ENCODE measurements at regions of chr20 and their contacts with region 1.

Region 1: DNA sequence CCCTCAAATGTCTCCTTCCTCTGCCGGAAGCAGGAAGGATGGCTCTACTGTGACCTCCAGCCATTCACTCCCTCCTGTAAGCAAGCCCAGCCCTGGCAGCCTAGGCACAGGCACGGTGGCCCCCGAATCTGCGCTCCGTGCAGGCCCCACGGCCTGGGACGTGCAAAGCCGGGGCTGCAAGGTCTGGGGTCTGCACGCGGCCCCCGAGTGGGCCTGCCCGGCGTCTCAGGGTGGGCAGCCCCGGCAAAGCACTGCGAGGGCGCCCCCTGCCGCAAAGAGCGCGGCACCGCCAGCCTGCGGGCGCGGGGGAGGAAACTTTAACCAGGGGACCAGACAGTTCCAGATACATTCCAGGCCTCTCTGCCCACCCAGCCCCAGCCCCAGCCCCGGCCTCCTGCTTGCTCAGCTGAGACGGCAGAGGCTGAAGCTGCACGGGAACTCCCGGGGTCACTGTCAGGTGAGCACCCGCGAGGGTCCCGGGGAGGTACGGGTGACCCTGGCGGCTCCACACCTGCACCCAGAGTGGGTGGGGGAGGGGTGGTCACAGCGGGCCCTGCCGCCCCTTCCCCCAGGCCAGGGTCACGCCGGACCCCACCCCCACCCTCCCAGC is 98.8 kb downstream of the ASXL1 start:
- DNase-seq: peak; percentile 97
- H3K4me3 ChIP-seq: peak overlapping the region; percentile 51 to 62
- H3K27ac ChIP-seq: peak overlapping the region; percentile 42 to 94; a peak in 3 of 4 replicates
- H3K4me1 ChIP-seq: peaks cover 5 to 69% of the 10 kb centered on the region in 2 experiments; a peak in 3 of 4 replicates
- H3K27me3 ChIP-seq: no peaks in the 10 kb centered on the region
- CTCF ChIP-seq: peak; percentile 78
- EP300 ChIP-seq: no peak; a peak in 1 of 4 replicates
- RAD21 ChIP-seq: peak; percentile 75

Region 2: GRCh38 chr20:32445539-32446273 is 11.3 kb before region 1 on chr20:
- CTCF ChIA-PET with region 1: interaction called, 37 read pairs
- POLR2A ChIA-PET with region 1: interaction called, 6 read pairs
- DNase-seq: peak; percentile 87
- H3K4me3 ChIP-seq: no peak overlapping the region; a peak in 1 of 4 replicates
- H3K27ac ChIP-seq: peak overlapping the region in 1 of 2 experiments; percentile 98; a peak in 2 of 4 replicates
- H3K4me1 ChIP-seq: peaks cover 0 to 69% of the 10 kb centered on the region in 2 experiments; a peak in 3 of 4 replicates
- H3K27me3 ChIP-seq: no peaks in the 10 kb centered on the region
- CTCF ChIP-seq: no peak
- EP300 ChIP-seq: peak in 1 of 2 experiments; percentile 67; a peak in 1 of 4 replicates
- RAD21 ChIP-seq: peak; percentile 46

Region 3: GRCh38 chr20:32467506-32468312 is 10.7 kb after region 1 on chr20:
- CTCF ChIA-PET with region 1: interaction called, 14 read pairs
- POLR2A ChIA-PET with region 1: no interaction called
- DNase-seq: no peak
- H3K4me3 ChIP-seq: no peak overlapping the region
- H3K27ac ChIP-seq: peak overlapping the region in 1 of 2 experiments; percentile 50; a peak in 1 of 4 replicates
- H3K4me1 ChIP-seq: peaks cover 23 to 69% of the 10 kb centered on the region in 2 experiments; a peak in 3 of 4 replicates
- H3K27me3 ChIP-seq: no peaks in the 10 kb centered on the region
- CTCF ChIP-seq: no peak
- EP300 ChIP-seq: no peak
- RAD21 ChIP-seq: no peak

Region 4: DNA sequence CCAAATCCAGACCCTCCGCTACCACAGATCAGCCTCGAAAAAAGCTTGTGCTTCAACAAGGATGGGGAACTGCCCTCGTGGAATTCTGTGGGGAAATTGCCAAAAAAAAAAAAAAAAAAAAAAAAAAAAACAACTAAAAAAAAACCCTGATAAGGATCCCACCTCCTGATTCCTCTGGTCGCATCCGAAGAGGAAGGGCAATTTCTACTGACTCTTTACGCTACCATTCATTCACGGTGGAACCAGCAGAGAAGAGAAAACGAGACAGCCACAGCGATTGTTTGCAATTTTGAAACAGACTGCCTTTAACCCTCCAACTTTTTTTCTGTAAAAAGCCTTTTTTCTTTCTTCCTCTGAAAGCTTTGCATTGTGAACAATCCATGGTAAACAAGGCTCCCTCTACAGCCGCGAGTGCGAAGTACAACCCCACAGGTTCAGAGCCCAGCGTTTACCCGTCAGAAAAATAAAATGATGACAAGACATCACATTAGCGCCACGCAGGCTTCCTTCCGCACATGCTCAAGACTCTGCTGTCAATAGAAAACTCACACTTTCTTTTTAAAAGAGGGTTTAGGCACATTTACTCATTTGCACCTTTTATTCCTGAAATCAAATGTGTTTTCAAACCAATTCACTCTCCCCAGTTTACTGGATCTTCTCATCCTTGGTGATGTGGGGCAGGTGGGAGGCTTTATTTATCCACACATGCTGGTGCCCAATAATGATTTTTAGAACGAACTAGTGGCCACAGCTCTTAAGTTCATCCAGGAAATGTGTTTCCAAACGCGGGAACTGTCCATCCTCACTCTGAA is 28.2 kb after region 1 on chr20:
- CTCF ChIA-PET with region 1: interaction called, 41 read pairs
- POLR2A ChIA-PET with region 1: interaction called, 9 read pairs
- DNase-seq: peak; percentile 61
- H3K4me3 ChIP-seq: peak overlapping the region; percentile 53 to 61
- H3K27ac ChIP-seq: peak overlapping the region; percentile 87 to 100
- H3K4me1 ChIP-seq: peaks cover 0 to 33% of the 10 kb centered on the region in 2 experiments; a peak in 2 of 4 replicates
- H3K27me3 ChIP-seq: no peaks in the 10 kb centered on the region
- CTCF ChIP-seq: peak; percentile 79
- EP300 ChIP-seq: no peak
- RAD21 ChIP-seq: peak; percentile 72

Region 5: DNA sequence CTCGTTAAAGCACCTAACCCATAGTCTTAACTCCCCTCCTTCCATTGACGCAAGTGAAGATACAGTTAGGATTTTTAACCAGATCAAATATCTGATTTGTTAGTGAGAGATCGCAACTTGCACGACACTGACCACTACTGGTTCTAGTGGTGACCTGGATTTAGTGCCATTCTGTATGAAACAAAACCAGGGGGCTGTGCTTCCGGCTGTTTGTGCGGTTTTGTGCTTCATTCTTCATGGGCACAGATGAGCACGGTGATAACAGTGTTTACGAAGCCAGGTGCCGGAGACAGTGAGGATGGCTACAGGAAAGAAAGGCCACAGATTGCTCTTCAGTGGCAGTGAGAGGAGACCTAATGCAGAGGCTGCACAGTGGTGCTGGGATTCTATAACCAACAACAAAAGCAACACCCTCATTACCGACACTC is 52.7 kb after region 1 on chr20:
- CTCF ChIA-PET with region 1: interaction called, 12 read pairs
- POLR2A ChIA-PET with region 1: no interaction called
- DNase-seq: peak; percentile 75
- H3K4me3 ChIP-seq: no peak overlapping the region
- H3K27ac ChIP-seq: peak overlapping the region in 1 of 2 experiments; percentile 75; a peak in 2 of 4 replicates
- H3K4me1 ChIP-seq: peaks cover 0 to 44% of the 10 kb centered on the region in 2 experiments; a peak in 1 of 4 replicates
- H3K27me3 ChIP-seq: no peaks in the 10 kb centered on the region
- CTCF ChIP-seq: peak; percentile 60
- EP300 ChIP-seq: peak in 1 of 2 experiments; percentile 51; a peak in 2 of 4 replicates
- RAD21 ChIP-seq: peak; percentile 69